Pancreas (tissue), 10 donors: ENCODE measurements at regions of chr2 and their contacts with region 1.

Region 1: GRCh38 chr2:152042636-152043615 is 55.9 kb downstream of the CACNB4 start:
- DNase-seq: no peak
- ATAC-seq: peak in 1 of 4 donors; percentile 16
- H3K4me3 ChIP-seq: no peak overlapping the region
- H3K27ac ChIP-seq: no peak overlapping the region
- H3K4me1 ChIP-seq: no peaks in the 10 kb centered on the region
- H3K27me3 ChIP-seq: no peaks in the 10 kb centered on the region
- CTCF ChIP-seq: no peak

Region 2: DNA sequence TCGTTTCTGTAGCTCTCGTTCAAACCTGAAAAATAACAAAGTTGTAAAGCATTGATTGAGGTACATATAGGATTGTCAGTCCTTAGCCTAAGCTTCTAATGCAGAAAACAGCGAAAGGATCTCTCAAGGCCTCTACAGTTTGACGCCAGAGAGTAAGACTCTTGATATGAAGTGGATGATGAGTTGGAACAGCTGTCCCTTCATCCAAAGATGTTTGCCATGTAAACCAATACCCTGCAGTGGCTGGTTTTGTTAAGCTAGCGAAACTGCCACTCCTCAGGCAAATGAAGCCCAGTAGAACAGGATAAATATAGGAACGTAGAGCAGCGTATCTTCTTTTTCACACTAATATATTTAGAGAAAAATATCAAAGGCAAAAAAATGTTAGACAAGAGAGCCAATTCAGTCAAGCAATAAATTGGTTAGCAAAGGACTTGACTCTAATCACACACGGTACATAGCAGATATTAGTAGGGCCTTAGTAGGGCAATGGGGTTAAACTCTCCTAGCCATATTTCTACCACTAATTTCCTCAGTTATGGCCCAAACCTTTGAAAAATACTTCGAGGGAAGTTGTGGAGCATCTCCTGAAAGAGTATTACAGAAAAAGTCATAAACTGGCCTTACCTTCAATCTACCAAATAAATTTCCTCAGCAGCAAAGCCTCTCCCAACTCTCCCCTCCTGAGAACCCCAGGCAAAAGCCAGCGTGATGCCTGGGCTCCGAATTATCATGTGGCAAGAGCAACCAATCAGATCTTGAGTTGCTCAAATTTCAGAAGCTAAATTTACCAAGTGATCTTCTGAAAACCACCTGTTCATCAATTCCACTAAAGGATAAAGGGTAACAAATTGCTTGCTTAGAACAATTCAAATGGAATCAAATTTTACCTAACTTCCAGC is 308.9 kb before region 1 on chr2 and contains the start of gene NEB:
- intact Hi-C with region 1: no loop called
- DNase-seq: no peak
- ATAC-seq: no peak
- H3K4me3 ChIP-seq: no peak within 1 kb of the TSS
- H3K27ac ChIP-seq: no peak within 1 kb of the TSS
- H3K4me1 ChIP-seq: no peaks in the 10 kb centered on the region
- H3K27me3 ChIP-seq: no peaks in the 10 kb centered on the region
- CTCF ChIP-seq: no peak
- total RNA-seq, gene NEB: 0.58 to 1.5 (median 0.70) TPM

Region 3: DNA sequence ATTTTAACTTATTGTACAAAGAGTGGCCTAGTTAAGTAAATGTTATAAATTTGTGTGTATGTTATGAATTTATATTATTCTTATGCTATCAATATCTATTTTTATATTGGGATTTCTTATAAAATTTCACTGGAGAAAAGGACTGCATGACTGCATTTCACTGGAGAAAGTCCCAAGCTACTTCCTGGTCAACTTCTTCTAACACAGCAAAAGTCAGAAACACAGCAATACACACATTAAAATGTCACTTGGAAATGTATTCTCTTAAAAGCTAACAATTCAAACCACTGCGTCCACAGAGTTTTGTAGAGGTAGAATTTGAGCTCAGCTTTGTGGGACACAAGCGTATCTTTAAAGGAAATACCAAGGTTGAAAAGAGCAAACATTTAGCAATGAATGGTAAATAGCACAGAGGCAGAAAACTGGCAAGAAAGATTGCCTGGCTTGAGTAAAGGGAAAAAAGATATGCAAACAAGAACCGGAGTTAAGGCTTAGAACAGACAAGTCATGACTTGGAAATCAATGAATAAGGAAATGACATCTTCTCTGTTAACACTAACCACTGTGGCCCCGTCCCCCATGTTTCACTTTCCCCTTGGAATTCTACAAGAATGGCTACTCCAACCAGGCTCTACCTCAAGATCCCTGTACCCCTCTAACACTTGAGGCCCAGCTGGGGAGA is 128.7 kb after region 1 on chr2:
- intact Hi-C with region 1: loop called in 1 of 3 experiments (anchors 5 kb)
- DNase-seq: peak in 2 of 6 donors; percentile 36 to 40
- ATAC-seq: peak; percentile 24 to 55 (median 38)
- H3K4me3 ChIP-seq: no peak overlapping the region
- H3K27ac ChIP-seq: peak overlapping the region; percentile 12 to 77 (median 62)
- H3K4me1 ChIP-seq: peaks cover 19 to 60% (median 51%) of the 10 kb centered on the region in 3 donors
- H3K27me3 ChIP-seq: no peaks in the 10 kb centered on the region
- CTCF ChIP-seq: no peak